CD8-positive, alpha-beta memory T cell (primary cell): ENCODE measurements at regions of chr17 and their contacts with region 1.

Region 1: DNA sequence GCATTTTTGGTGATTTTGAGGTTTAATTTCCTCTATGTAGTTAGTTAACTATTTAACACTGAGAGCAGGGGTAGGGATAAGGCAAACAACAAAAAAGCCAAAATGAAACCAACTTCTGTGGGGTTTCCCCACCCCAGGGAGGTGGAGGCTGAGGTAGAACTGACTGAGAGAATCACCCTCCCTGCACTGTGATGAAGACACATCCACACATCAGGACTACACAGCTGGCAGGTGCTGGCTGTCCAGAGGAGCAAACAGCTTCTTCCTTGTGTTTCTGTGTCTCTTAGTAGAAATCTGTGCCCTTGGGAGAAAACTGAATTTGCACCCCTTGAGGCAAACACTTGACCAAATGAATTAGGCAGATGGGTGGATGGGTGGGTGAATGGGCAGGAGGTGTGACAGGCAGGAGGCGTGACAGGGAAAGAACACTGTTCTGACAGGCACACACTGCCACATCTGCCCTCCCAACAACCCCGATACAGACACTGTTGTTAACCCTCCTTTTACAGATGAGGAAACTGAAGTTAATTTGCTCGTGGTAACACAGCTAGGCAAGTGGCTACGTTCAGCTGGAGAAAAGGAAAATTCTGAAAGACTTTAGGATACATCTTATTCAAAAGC is 62.9 kb upstream of the AMZ2 start:
- DNase-seq: peak in 4 of 5 donors; percentile 52 to 78 (median 61)
- H3K4me3 ChIP-seq: peak overlapping the region; percentile 67
- H3K4me3 Mint-ChIP-seq: peak overlapping the region; percentile 79 to 98 (median 94)
- H3K27ac ChIP-seq: peak overlapping the region; percentile 18
- H3K27ac Mint-ChIP-seq: peak overlapping the region; percentile 91 to 97 (median 96)
- H3K4me1 ChIP-seq: peaks cover 49% of the 10 kb centered on the region
- H3K4me1 Mint-ChIP-seq: peaks cover 59 to 91% (median 79%) of the 10 kb centered on the region in 3 donors
- H3K27me3 ChIP-seq: no peaks in the 10 kb centered on the region
- H3K27me3 Mint-ChIP-seq: no peaks in the 10 kb centered on the region

Region 2: GRCh38 chr17:68029512-68030215 is 155.3 kb before region 1 on chr17:
- CTCF ChIA-PET with region 1: no interaction called
- POLR2A ChIA-PET with region 1: no interaction called
- DNase-seq: no peak
- H3K4me3 ChIP-seq: no peak overlapping the region
- H3K4me3 Mint-ChIP-seq: no peak overlapping the region
- H3K27ac ChIP-seq: peak overlapping the region; percentile 11
- H3K27ac Mint-ChIP-seq: no peak overlapping the region
- H3K4me1 ChIP-seq: no peaks in the 10 kb centered on the region
- H3K4me1 Mint-ChIP-seq: no peaks in the 10 kb centered on the region
- H3K27me3 ChIP-seq: no peaks in the 10 kb centered on the region
- H3K27me3 Mint-ChIP-seq: peaks cover 0 to 2% of the 10 kb centered on the region in 2 donors

Region 3: DNA sequence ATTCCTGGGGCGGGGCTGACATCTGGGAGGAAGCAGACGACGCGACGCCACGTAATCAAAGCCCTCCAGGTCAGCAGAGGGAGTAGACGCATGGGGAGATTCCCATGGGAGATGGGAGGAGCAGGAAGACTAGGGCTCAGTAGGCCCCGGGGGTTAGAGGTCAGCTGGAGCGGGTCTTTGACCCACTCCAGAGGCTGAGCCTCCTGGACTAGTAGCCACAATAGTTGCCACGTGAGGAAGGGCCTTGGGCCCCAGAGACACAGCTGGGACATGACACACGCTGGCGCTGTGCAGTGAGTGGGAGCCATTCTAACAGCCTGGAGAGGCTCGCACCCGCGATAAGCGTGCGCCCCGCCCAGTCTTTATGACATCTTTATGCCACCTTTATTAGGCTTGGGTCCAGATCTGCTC is 32.8 kb before region 1 on chr17:
- CTCF ChIA-PET with region 1: no interaction called
- POLR2A ChIA-PET with region 1: no interaction called
- DNase-seq: no peak
- H3K4me3 ChIP-seq: no peak overlapping the region
- H3K4me3 Mint-ChIP-seq: no peak overlapping the region
- H3K27ac ChIP-seq: no peak overlapping the region
- H3K27ac Mint-ChIP-seq: no peak overlapping the region
- H3K4me1 ChIP-seq: no peaks in the 10 kb centered on the region
- H3K4me1 Mint-ChIP-seq: no peaks in the 10 kb centered on the region
- H3K27me3 ChIP-seq: no peaks in the 10 kb centered on the region
- H3K27me3 Mint-ChIP-seq: no peaks in the 10 kb centered on the region

Region 4: GRCh38 chr17:68172461-68172954 is 12.4 kb before region 1 on chr17:
- CTCF ChIA-PET with region 1: interaction called, 24 read pairs
- POLR2A ChIA-PET with region 1: interaction called, 9 read pairs
- DNase-seq: peak; percentile 61 to 82 (median 68)
- H3K4me3 ChIP-seq: no peak overlapping the region
- H3K4me3 Mint-ChIP-seq: no peak overlapping the region
- H3K27ac ChIP-seq: no peak overlapping the region
- H3K27ac Mint-ChIP-seq: no peak overlapping the region
- H3K4me1 ChIP-seq: peaks cover 7% of the 10 kb centered on the region
- H3K4me1 Mint-ChIP-seq: peaks cover 11 to 31% (median 19%) of the 10 kb centered on the region in 3 donors
- H3K27me3 ChIP-seq: no peaks in the 10 kb centered on the region
- H3K27me3 Mint-ChIP-seq: no peaks in the 10 kb centered on the region

Region 5: GRCh38 chr17:68196944-68197595 is 12.1 kb after region 1 on chr17:
- CTCF ChIA-PET with region 1: interaction called, 183 read pairs
- POLR2A ChIA-PET with region 1: interaction called, 171 read pairs
- DNase-seq: peak in 3 of 5 donors; percentile 24 to 71 (median 45)
- H3K4me3 ChIP-seq: peak overlapping the region; percentile 56
- H3K4me3 Mint-ChIP-seq: peak overlapping the region; percentile 76 to 91 (median 81)
- H3K27ac ChIP-seq: no peak overlapping the region
- H3K27ac Mint-ChIP-seq: peak overlapping the region in 2 of 8 donors; percentile 74 to 80
- H3K4me1 ChIP-seq: peaks cover 30% of the 10 kb centered on the region
- H3K4me1 Mint-ChIP-seq: peaks cover 29 to 59% (median 29%) of the 10 kb centered on the region in 3 donors
- H3K27me3 ChIP-seq: peaks cover 6% of the 10 kb centered on the region
- H3K27me3 Mint-ChIP-seq: peaks cover 0 to 4% of the 10 kb centered on the region in 2 donors

Region 6: GRCh38 chr17:68247445-68248198 is 62.7 kb after region 1 on chr17 and contains the start of gene AMZ2:
- CTCF ChIA-PET with region 1: interaction called, 8 read pairs
- POLR2A ChIA-PET with region 1: interaction called, 28 read pairs
- DNase-seq: peak; percentile 95 to 99 (median 98)
- H3K4me3 ChIP-seq: peak within 1 kb of the TSS; percentile 97
- H3K4me3 Mint-ChIP-seq: peak within 1 kb of the TSS; percentile 87 to 98 (median 96)
- H3K27ac ChIP-seq: peak within 1 kb of the TSS; percentile 96
- H3K27ac Mint-ChIP-seq: peak within 1 kb of the TSS; percentile 96 to 100 (median 98)
- H3K4me1 ChIP-seq: peaks cover 34% of the 10 kb centered on the region
- H3K4me1 Mint-ChIP-seq: peaks cover 35 to 63% (median 53%) of the 10 kb centered on the region in 3 donors
- H3K27me3 ChIP-seq: no peaks in the 10 kb centered on the region
- H3K27me3 Mint-ChIP-seq: peaks cover 0 to 8% of the 10 kb centered on the region in 2 donors
- total RNA-seq, gene AMZ2: 113 to 118 TPM

Region 7: GRCh38 chr17:68381076-68381900 is 196.4 kb after region 1 on chr17:
- CTCF ChIA-PET with region 1: no interaction called
- POLR2A ChIA-PET with region 1: interaction called, 11 read pairs
- DNase-seq: no peak
- H3K4me3 ChIP-seq: no peak overlapping the region
- H3K4me3 Mint-ChIP-seq: no peak overlapping the region
- H3K27ac ChIP-seq: no peak overlapping the region
- H3K27ac Mint-ChIP-seq: peak overlapping the region in 3 of 8 donors; percentile 17 to 75 (median 59)
- H3K4me1 ChIP-seq: peaks cover 22% of the 10 kb centered on the region
- H3K4me1 Mint-ChIP-seq: peaks cover 17 to 33% (median 26%) of the 10 kb centered on the region in 3 donors
- H3K27me3 ChIP-seq: no peaks in the 10 kb centered on the region
- H3K27me3 Mint-ChIP-seq: no peaks in the 10 kb centered on the region